Calu3 (cell line): ENCODE measurements at regions of chr15 and their contacts with region 1.

Region 1: GRCh38 chr15:48800811-48801455 is 9.9 kb downstream of the CEP152 start:
- DNase-seq: no peak
- H3K4me3 Mint-ChIP-seq: no peak overlapping the region
- H3K27ac Mint-ChIP-seq: no peak overlapping the region
- H3K4me1 Mint-ChIP-seq: peaks cover 29% of the 10 kb centered on the region
- H3K27me3 Mint-ChIP-seq: no peaks in the 10 kb centered on the region
- CTCF ChIP-seq: no peak

Region 2: GRCh38 chr15:48645558-48646330 is 155.2 kb before region 1 on chr15 and contains the start of gene FBN1:
- CTCF ChIA-PET with region 1: no interaction called
- intact Hi-C with region 1: loop called (anchors 10 kb)
- DNase-seq: peak; percentile 36
- H3K4me3 Mint-ChIP-seq: peak within 1 kb of the TSS; percentile 58
- H3K27ac Mint-ChIP-seq: no peak within 1 kb of the TSS
- H3K4me1 Mint-ChIP-seq: no peaks in the 10 kb centered on the region
- H3K27me3 Mint-ChIP-seq: peaks cover 35% of the 10 kb centered on the region
- CTCF ChIP-seq: no peak
- total RNA-seq, gene FBN1: 0.93 and 1.1 TPM in 2 replicates

Region 3: DNA sequence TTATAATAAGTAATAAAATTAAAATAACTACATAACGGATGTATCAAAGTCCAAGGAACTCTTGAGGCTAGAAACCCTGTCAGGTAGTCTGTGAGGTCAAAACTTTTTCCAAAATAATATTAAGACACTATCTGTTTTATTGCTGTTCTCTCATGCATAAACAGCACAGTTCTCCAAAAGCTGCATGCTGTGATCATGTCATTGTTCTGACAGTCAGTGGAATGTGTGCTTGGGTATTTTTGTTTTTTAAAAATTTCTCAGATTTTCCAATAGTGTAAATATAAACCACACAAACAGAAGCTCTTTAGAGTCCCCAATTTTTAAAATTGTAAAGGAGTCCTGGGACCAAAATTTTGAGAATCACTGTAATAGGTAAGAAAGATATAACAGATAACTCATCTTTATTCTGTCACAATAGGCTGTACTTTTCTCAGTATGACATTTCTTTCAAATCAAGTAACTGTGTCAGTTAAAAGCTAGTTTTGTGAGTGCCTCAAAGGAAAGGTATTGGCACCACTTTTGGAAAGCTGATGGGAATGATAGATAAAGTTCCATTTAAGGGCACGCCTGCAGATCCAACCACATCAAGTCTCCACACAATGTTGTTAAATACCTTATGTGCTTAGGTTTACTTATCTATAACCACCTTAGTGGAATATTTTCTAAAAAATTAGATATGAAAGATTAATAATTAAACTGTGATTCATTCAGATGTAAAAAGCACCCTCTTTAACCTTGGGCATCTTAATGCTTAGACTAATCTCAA is 39.4 kb before region 1 on chr15:
- CTCF ChIA-PET with region 1: no interaction called
- intact Hi-C with region 1: loop called (anchors 2 kb)
- DNase-seq: no peak
- H3K4me3 Mint-ChIP-seq: no peak overlapping the region
- H3K27ac Mint-ChIP-seq: no peak overlapping the region
- H3K4me1 Mint-ChIP-seq: peaks cover 16% of the 10 kb centered on the region
- H3K27me3 Mint-ChIP-seq: no peaks in the 10 kb centered on the region
- CTCF ChIP-seq: no peak